ENCODE measurements at regions of chr15 and their contacts with region 1.

Region 1: GRCh38 chr15:99104788-99105513 is at the start of gene SYNM:
- DNase-seq: peak; percentile 78 to 89 (median 87)
- H3K4me3 ChIP-seq: peak within 1 kb of the TSS in 2 of 3 donors; percentile 23 to 55
- H3K27ac ChIP-seq: no peak within 1 kb of the TSS
- H3K4me1 ChIP-seq: peaks cover 0 to 4% (median 0%) of the 10 kb centered on the region in 3 donors
- H3K27me3 ChIP-seq: peaks cover 8% of the 10 kb centered on the region
- CTCF ChIP-seq: peak; percentile 85
- total RNA-seq, gene SYNM: 23.2 TPM

Region 2: GRCh38 chr15:99163271-99164062 is 58.5 kb after region 1 on chr15:
- intact Hi-C with region 1: no loop called
- DNase-seq: no peak
- H3K4me3 ChIP-seq: no peak overlapping the region
- H3K27ac ChIP-seq: no peak overlapping the region
- H3K4me1 ChIP-seq: no peaks in the 10 kb centered on the region
- H3K27me3 ChIP-seq: no peaks in the 10 kb centered on the region
- CTCF ChIP-seq: no peak

Region 3: DNA sequence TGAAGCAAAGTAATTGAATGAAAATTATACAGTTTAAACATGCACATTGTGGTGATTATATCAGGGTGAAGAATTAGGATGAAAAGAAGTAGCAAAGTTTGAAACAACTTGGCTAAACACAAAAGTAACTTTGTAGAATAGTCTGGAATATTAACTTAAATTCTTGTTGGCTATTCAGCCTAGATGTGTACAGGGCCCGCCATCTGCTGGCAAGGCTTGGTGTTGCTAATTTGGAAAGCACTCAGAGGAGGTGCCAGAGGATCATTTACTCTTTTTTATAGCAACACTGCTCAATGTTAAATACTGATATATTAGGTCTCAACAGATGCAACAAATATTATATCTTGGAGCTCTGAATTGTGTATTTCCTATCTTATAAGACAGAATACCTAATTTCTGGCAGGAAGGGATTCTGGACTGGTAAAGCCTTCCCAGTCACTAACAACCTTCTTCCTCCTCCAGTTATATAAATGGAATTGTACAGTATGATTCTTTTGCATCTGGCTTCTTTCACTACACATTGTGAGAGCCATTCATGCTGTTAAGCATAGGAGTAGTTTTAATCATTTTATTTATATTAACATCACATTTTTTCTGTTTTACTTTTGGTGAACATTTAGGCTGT is 108.3 kb after region 1 on chr15:
- intact Hi-C with region 1: loop called (anchors 5 kb)
- DNase-seq: peak; percentile 58 to 82 (median 74)
- H3K4me3 ChIP-seq: no peak overlapping the region
- H3K27ac ChIP-seq: no peak overlapping the region
- H3K4me1 ChIP-seq: no peaks in the 10 kb centered on the region
- H3K27me3 ChIP-seq: no peaks in the 10 kb centered on the region
- CTCF ChIP-seq: peak; percentile 92

Measured in kidney (tissue), 22 donors.